Stomach (tissue), 19 donors: ENCODE measurements at regions of chr7 and their contacts with region 1.

Region 1: GRCh38 chr7:64618785-64619456 is 47.0 kb upstream of the ZNF107 start:
- DNase-seq: peak in 1 of 2 donors; percentile 32
- H3K4me3 ChIP-seq: no peak overlapping the region
- H3K27ac ChIP-seq: no peak overlapping the region
- H3K4me1 ChIP-seq: no peaks in the 10 kb centered on the region
- H3K27me3 ChIP-seq: no peaks in the 10 kb centered on the region
- CTCF ChIP-seq: peak in 4 of 7 experiments; percentile 37 to 55 (median 50)
- EP300 ChIP-seq: no peak
- POLR2A ChIP-seq: no peak

Region 2: DNA sequence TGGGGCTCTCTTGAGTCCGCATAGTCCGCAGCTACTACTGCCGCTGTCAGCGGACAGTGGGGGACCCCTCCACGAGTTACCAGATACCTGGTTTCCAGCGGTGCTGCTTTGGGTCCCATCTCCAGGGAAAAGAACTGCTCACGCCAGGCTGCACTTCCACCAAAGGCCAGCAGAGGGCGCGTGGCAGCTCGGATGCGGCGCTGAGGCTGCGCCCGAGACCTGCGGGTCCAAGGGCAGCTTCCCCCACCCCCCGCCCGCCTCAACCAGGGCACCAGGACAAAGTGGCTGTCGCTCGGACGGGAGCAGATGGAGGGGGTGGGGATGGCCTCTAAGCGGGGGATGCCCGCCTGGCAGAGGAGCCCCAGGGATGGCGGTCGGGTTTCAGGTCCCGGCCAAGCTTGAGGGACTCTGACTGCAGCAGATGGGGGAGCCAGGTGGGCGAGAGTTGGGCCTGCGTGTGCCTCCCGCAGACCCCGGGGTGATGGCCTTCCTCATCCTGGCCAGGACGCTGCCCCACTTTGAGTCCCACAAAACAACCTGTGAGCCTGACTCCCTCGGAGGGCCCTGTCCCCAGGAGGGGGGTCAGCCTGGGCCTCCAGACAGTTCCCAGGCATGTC is 435.7 kb before region 1 on chr7:
- intact Hi-C with region 1: loop called (anchors 10 kb)
- DNase-seq: no peak
- H3K4me3 ChIP-seq: no peak overlapping the region
- H3K27ac ChIP-seq: no peak overlapping the region
- H3K4me1 ChIP-seq: peaks cover 0 to 14% (median 3%) of the 10 kb centered on the region in 4 donors
- H3K27me3 ChIP-seq: peaks cover 0 to 37% (median 0%) of the 10 kb centered on the region in 3 donors
- CTCF ChIP-seq: peak in 5 of 7 experiments; percentile 18 to 77 (median 61)
- EP300 ChIP-seq: no peak
- POLR2A ChIP-seq: no peak

Region 3: DNA sequence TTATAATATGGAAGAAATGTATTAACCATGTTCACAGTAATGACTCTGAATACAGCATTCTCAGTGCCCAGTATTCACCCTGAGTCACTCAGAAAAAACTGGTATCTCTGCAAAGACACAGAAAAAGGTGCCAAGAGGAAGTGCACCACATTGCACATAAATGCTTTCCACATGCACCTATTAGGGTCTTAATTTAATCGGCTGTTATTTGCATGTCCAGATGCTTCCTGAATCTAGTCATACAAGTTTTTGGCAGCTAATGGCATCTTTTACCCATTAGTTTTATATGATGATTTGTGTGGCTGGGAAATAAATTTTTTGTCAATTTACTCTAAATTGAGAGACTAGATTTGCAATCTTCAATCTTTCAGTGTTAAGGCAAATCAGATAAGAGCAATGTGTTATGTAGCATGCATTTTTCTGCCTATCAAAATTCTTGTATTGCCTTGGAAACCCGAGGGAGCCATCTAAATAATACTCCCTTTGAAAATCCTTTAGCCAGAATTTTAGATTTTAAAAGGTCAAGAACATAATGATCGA is 114.3 kb before region 1 on chr7:
- intact Hi-C with region 1: no loop called
- DNase-seq: no peak
- H3K4me3 ChIP-seq: no peak overlapping the region
- H3K27ac ChIP-seq: no peak overlapping the region
- H3K4me1 ChIP-seq: no peaks in the 10 kb centered on the region
- H3K27me3 ChIP-seq: no peaks in the 10 kb centered on the region
- CTCF ChIP-seq: no peak
- EP300 ChIP-seq: no peak
- POLR2A ChIP-seq: no peak